Right lobe of liver (tissue), 6 donors: ENCODE measurements at regions of chr6 and their contacts with region 1.

Region 1: DNA sequence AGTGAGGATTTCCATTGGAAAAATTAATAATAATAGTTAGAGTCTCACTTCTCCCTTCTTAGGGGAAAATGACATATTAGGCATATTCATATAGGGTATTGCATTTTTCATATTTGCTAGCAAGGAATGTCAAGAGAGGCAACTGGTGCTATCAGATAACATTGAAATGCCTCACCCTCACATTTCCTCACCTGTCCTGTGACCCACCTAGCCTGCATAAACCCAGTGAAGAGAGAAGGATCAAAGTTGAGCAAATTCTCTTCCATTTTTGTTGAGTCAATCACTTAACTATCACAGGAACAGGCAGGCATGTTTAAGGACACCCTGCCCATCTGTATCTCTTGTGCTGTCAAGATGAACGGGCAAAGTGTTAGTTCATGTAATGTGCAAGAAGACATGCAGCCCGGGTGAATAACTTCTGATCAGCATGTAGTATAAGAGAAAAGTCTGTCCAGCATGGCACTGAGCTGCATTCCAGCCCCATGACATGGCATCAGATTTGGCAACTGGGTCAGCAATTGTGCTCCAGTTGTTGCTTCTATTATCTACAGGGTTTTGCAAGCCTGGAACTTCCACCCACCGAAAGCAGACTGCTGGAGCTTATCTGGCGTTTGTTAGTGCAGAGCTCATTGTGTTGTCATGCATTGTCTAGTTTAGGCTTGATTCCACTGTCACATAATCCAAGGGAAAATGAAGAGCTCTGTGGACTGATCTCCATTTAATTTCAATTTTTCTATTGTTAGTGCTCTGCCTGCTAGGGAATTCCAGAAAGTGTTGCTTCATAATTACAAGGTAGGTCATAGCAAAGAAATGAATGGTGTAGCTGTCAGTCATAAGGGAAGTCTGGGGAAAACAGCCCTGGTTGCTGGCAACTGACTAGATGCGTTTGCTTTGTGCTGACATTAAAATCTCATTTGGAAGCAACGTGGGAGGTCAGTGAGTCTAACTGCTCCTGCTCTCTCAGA is 138.4 kb upstream of the TNFAIP3 start:
- DNase-seq: peak in 1 of 3 donors; percentile 57
- ATAC-seq: peak in 3 of 4 donors; percentile 33 to 67 (median 48)
- H3K4me3 ChIP-seq: no peak overlapping the region
- H3K27ac ChIP-seq: peak overlapping the region in 1 of 3 donors; percentile 4
- H3K4me1 ChIP-seq: peaks cover 0 to 10% (median 5%) of the 10 kb centered on the region in 4 donors
- H3K27me3 ChIP-seq: no peaks in the 10 kb centered on the region
- CTCF ChIP-seq: no peak
- POLR2A ChIP-seq: peak; percentile 47

Region 2: DNA sequence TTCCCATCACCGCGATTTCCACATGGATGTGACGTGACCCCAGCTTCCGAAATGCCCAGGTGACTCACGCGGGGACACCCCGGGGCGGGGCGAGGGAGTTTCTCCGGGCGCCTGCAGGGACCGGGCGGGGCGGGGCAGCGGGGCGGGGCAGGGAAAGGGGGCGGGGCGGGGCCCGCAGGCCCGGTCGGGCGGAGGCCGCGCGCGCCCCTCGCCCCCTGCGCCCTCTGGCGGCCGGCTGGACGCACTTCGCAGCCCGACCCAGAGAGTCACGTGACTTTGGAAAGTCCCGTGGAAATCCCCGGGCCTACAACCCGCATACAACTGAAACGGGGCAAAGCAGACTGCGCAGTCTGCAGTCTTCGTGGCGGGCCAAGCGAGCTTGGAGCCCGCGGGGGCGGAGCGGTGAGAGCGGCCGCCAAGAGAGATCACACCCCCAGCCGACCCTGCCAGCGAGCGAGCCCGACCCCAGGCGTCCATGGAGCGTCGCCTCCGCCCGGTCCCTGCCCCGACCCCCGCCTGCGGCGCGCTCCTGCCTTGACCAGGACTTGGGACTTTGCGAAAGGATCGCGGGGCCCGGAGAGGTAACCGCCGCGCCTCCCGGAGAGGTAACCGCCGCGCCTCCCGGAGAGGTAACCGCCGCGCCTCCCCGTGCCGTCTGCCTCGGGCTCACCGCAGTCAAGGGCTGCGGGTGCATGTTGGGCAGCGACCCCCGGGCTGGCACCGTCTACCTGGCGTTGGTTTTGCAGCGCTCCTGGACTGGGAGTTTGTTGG is 138.4 kb after region 1 on chr6 and contains the start of gene TNFAIP3:
- intact Hi-C with region 1: loop called in 1 of 2 experiments (anchors 10 kb)
- DNase-seq: peak; percentile 95 to 96 (median 96)
- ATAC-seq: peak; percentile 79 to 92 (median 90)
- H3K4me3 ChIP-seq: peak within 1 kb of the TSS; percentile 71 to 87 (median 76)
- H3K27ac ChIP-seq: peak within 1 kb of the TSS; percentile 93 to 97 (median 95)
- H3K4me1 ChIP-seq: peaks cover 0 to 33% (median 7%) of the 10 kb centered on the region in 4 donors
- H3K27me3 ChIP-seq: no peaks in the 10 kb centered on the region
- CTCF ChIP-seq: peak; percentile 75 to 98 (median 85)
- POLR2A ChIP-seq: peak; percentile 97
- total RNA-seq, gene TNFAIP3: 8.3 to 38.1 (median 13.6) TPM